Mammary epithelial cell (primary cell): ENCODE measurements at regions of chr11 and their contacts with region 1.

Region 1: GRCh38 chr11:8964324-8965320 is at the start of gene TMEM9B:
- DNase-seq: peak; percentile 92
- H3K4me3 ChIP-seq: peak within 1 kb of the TSS; percentile 90 to 96 (median 95)
- H3K27ac ChIP-seq: peak within 1 kb of the TSS; percentile 86
- H3K4me1 ChIP-seq: peaks cover 23% of the 10 kb centered on the region
- H3K27me3 ChIP-seq: no peaks in the 10 kb centered on the region
- CTCF ChIP-seq: no peak
- total RNA-seq, gene TMEM9B: 37.8 to 52.7 TPM

Region 2: DNA sequence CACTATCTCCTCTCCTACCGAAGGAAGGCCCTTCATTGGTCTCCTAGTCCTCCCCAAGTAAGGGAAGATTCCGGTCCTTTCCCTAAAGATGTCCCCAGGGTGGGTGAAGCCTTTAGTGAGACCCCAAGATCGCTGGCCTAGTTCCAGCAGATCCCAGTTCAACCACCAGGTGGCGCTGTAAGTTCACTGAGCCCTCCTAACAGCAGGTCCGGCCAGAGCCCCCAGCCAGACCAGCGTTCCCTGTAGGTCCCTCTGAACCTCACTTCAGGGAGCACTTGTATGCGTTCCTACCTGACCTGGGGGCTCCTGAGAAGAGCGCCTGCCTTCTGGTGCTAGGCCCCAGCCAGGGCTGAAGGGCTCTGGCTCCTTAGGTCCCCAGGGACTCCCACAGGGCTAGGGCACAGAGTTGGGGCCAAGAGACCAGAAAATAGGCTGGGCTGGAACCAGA is 739.0 kb before region 1 on chr11:
- CTCF ChIA-PET with region 1: no interaction called
- dilution Hi-C with region 1: no loop called
- in situ Hi-C with region 1: no loop called
- intact Hi-C with region 1: loop called (anchors 10 kb)
- DNase-seq: no peak
- H3K4me3 ChIP-seq: no peak overlapping the region
- H3K27ac ChIP-seq: no peak overlapping the region
- H3K4me1 ChIP-seq: peaks cover 39% of the 10 kb centered on the region
- H3K27me3 ChIP-seq: no peaks in the 10 kb centered on the region
- CTCF ChIP-seq: peak; percentile 63 to 93

Region 3: GRCh38 chr11:8604078-8604723 is 360.4 kb before region 1 on chr11:
- CTCF ChIA-PET with region 1: no interaction called
- dilution Hi-C with region 1: no loop called
- in situ Hi-C with region 1: no loop called
- intact Hi-C with region 1: loop called (anchors 10 kb)
- DNase-seq: peak; percentile 100
- H3K4me3 ChIP-seq: no peak overlapping the region
- H3K27ac ChIP-seq: peak overlapping the region; percentile 69
- H3K4me1 ChIP-seq: peaks cover 20% of the 10 kb centered on the region
- H3K27me3 ChIP-seq: no peaks in the 10 kb centered on the region
- CTCF ChIP-seq: peak; percentile 71 to 79

Region 4: GRCh38 chr11:8768625-8769333 is 195.8 kb before region 1 on chr11:
- CTCF ChIA-PET with region 1: no interaction called
- dilution Hi-C with region 1: no loop called
- in situ Hi-C with region 1: no loop called
- intact Hi-C with region 1: loop called (anchors 2 kb)
- DNase-seq: peak; percentile 66
- H3K4me3 ChIP-seq: no peak overlapping the region
- H3K27ac ChIP-seq: peak overlapping the region; percentile 96
- H3K4me1 ChIP-seq: peaks cover 81% of the 10 kb centered on the region
- H3K27me3 ChIP-seq: no peaks in the 10 kb centered on the region
- CTCF ChIP-seq: peak; percentile 19 to 60

Region 5: DNA sequence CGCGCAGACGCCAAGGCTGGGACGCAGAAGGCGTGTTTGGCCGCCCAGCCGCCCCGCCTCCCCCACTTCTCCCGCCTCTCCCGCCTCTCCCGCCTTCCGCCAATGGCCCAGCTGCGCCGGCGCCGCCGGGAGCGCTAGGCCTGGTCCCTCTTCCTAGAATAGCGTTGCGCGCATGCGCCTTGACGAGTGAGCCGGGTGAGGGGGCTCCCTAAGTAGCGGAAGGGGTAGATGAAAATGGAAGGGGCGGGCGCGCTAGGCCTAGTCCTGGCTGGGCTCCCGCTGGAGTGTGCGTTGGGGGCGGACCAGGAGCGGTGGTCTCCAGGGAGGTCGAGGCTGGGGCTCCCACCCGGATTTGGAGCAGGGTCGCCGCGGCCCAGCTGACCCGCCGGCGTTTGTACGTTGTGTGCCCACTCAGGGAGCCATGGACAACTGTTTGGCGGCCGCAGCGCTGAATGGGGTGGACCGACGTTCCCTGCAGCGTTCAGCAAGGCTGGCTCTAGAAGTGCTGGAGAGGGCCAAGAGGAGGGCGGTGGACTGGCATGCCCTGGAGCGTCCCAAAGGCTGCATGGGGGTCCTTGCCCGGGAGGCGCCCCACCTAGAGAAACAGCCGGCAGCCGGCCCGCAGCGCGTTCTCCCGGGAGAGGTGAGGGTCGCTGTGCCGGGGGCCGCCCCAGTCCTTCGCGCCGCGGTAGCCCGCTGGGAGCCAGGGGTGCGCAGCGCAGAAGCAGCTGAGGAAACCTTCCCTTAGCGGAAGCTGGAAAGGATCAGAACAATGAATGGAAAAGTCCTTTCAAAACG is 53.4 kb before region 1 on chr11 and contains the start of gene AKIP1:
- CTCF ChIA-PET with region 1: interaction called, 11 read pairs
- dilution Hi-C with region 1: no loop called
- in situ Hi-C with region 1: no loop called
- intact Hi-C with region 1: loop called (anchors 1 kb)
- DNase-seq: peak; percentile 91
- H3K4me3 ChIP-seq: peak within 1 kb of the TSS; percentile 83 to 94 (median 83)
- H3K27ac ChIP-seq: peak within 1 kb of the TSS; percentile 55
- H3K4me1 ChIP-seq: peaks cover 40% of the 10 kb centered on the region
- H3K27me3 ChIP-seq: no peaks in the 10 kb centered on the region
- CTCF ChIP-seq: no peak
- total RNA-seq, gene AKIP1: 31.7 to 35.2 TPM

Region 6: DNA sequence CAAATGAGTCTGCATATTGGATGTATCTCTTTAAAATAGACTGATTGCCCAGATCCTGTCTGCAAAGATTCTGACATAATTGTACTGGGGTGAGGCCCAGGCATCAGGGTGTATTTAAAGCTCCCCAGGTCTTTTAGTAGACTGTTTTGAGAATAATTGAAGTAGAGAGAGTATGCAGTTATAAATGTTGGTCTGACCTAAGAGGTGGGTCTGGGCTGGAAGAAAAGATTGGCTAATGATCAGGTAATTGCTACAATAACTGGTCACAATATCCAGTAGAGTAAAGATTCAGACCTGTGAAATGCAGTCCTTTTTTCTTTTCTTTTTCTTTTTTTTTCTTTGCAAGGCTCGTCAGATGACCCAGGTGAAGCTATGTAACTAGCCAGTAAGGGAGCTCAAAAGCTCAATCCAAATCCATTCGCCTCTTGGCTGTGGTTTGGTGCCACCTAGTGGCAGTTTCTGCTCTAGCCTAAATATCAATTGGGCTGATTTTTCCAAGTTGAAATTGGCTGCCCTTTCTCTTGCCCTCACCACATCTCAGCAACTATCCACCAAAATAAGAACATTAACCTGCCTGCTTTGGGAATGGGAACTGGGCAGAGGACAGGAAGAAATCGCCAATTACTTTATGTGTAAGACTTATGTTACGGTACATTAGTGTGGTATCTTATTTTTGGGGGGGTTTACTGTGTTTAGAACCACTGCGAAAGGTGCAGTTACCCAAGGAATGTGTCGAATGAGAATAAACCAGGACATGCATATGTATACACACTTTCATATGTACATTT is 542.1 kb after region 1 on chr11:
- CTCF ChIA-PET with region 1: no interaction called
- dilution Hi-C with region 1: no loop called
- in situ Hi-C with region 1: no loop called
- intact Hi-C with region 1: loop called (anchors 2 kb)
- DNase-seq: peak; percentile 60
- H3K4me3 ChIP-seq: no peak overlapping the region
- H3K27ac ChIP-seq: no peak overlapping the region
- H3K4me1 ChIP-seq: no peaks in the 10 kb centered on the region
- H3K27me3 ChIP-seq: no peaks in the 10 kb centered on the region
- CTCF ChIP-seq: peak; percentile 88 to 91